AG04450 (cell line): ENCODE measurements at regions of chr2 and their contacts with region 1.

Region 1: GRCh38 chr2:147082850-147083522 is 761.8 kb upstream of the ACVR2A start:
- DNase-seq: peak; percentile 32
- H3K4me3 ChIP-seq: no peak overlapping the region
- H3K27ac ChIP-seq: no peak overlapping the region
- H3K27me3 ChIP-seq: no peaks in the 10 kb centered on the region
- CTCF ChIP-seq: peak; percentile 90

Region 2: GRCh38 chr2:147045113-147045512 is 37.9 kb before region 1 on chr2:
- CTCF ChIA-PET with region 1: interaction called, 10 read pairs
- POLR2A ChIA-PET with region 1: no interaction called
- DNase-seq: no peak
- H3K4me3 ChIP-seq: no peak overlapping the region
- H3K27ac ChIP-seq: no peak overlapping the region
- H3K27me3 ChIP-seq: no peaks in the 10 kb centered on the region
- CTCF ChIP-seq: peak; percentile 69

Region 3: DNA sequence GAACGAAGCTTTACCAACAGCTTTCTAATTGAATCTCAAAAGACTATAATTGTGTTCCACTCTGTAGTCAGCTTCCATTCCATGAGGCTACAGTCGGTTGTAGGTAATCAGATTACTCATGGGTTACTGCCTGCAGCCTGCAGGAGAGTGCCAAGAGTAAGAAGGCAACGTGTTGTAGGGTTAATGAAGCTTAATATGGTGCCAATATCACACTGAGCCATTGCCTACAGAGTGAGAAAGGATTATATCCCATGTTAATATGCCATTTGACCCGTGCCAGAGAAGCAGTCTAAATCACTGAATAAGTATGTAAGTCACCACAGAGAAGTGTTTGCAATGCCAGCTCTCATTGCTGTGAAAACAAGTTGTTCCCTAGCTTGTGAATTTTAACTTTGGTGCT is 27.3 kb after region 1 on chr2:
- CTCF ChIA-PET with region 1: interaction called, 11 read pairs
- POLR2A ChIA-PET with region 1: no interaction called
- DNase-seq: no peak
- H3K4me3 ChIP-seq: no peak overlapping the region
- H3K27ac ChIP-seq: no peak overlapping the region
- H3K27me3 ChIP-seq: no peaks in the 10 kb centered on the region
- CTCF ChIP-seq: no peak